B cell (primary cell): ENCODE measurements at regions of chr1 and their contacts with region 1.

Region 1: GRCh38 chr1:50873458-50874187 is 86.4 kb downstream of the FAF1 start:
- DNase-seq: peak; percentile 86
- ATAC-seq: peak; percentile 88
- H3K4me3 ChIP-seq: peak overlapping the region in 2 of 5 experiments; percentile 30 to 41
- H3K4me3 Mint-ChIP-seq: peak overlapping the region; percentile 81
- H3K27ac ChIP-seq: no peak overlapping the region
- H3K27ac Mint-ChIP-seq: peak overlapping the region; percentile 68
- H3K4me1 ChIP-seq: peaks cover 0 to 3% of the 10 kb centered on the region in 2 donors
- H3K4me1 Mint-ChIP-seq: peaks cover 11% of the 10 kb centered on the region
- H3K27me3 ChIP-seq: no peaks in the 10 kb centered on the region
- H3K27me3 Mint-ChIP-seq: no peaks in the 10 kb centered on the region
- CTCF ChIP-seq: peak; percentile 91

Region 2: GRCh38 chr1:50109647-50110075 is 764.0 kb before region 1 on chr1:
- CTCF ChIA-PET with region 1: no interaction called
- POLR2A ChIA-PET with region 1: no interaction called
- intact Hi-C with region 1: no loop called
- DNase-seq: peak; percentile 4
- ATAC-seq: no peak
- H3K4me3 ChIP-seq: no peak overlapping the region
- H3K4me3 Mint-ChIP-seq: peak overlapping the region; percentile 9
- H3K27ac ChIP-seq: no peak overlapping the region
- H3K27ac Mint-ChIP-seq: no peak overlapping the region
- H3K4me1 ChIP-seq: peaks cover 14 to 19% of the 10 kb centered on the region in 2 donors
- H3K4me1 Mint-ChIP-seq: peaks cover 18% of the 10 kb centered on the region
- H3K27me3 ChIP-seq: peaks cover 0 to 11% (median 5%) of the 10 kb centered on the region in 4 experiments
- H3K27me3 Mint-ChIP-seq: peaks cover 58% of the 10 kb centered on the region
- CTCF ChIP-seq: no peak

Region 3: GRCh38 chr1:50942334-50942733 is 68.7 kb after region 1 on chr1:
- CTCF ChIA-PET with region 1: no interaction called
- POLR2A ChIA-PET with region 1: no interaction called
- intact Hi-C with region 1: no loop called
- DNase-seq: no peak
- ATAC-seq: no peak
- H3K4me3 ChIP-seq: no peak overlapping the region
- H3K4me3 Mint-ChIP-seq: no peak overlapping the region
- H3K27ac ChIP-seq: no peak overlapping the region
- H3K27ac Mint-ChIP-seq: no peak overlapping the region
- H3K4me1 ChIP-seq: no peaks in the 10 kb centered on the region
- H3K4me1 Mint-ChIP-seq: peaks cover 26% of the 10 kb centered on the region
- H3K27me3 ChIP-seq: no peaks in the 10 kb centered on the region
- H3K27me3 Mint-ChIP-seq: no peaks in the 10 kb centered on the region
- CTCF ChIP-seq: no peak

Region 4: GRCh38 chr1:51019811-51020210 is 146.2 kb after region 1 on chr1:
- CTCF ChIA-PET with region 1: no interaction called
- POLR2A ChIA-PET with region 1: no interaction called
- intact Hi-C with region 1: no loop called
- DNase-seq: no peak
- ATAC-seq: no peak
- H3K4me3 ChIP-seq: no peak overlapping the region
- H3K4me3 Mint-ChIP-seq: no peak overlapping the region
- H3K27ac ChIP-seq: no peak overlapping the region
- H3K27ac Mint-ChIP-seq: no peak overlapping the region
- H3K4me1 ChIP-seq: no peaks in the 10 kb centered on the region
- H3K4me1 Mint-ChIP-seq: no peaks in the 10 kb centered on the region
- H3K27me3 ChIP-seq: no peaks in the 10 kb centered on the region
- H3K27me3 Mint-ChIP-seq: peaks cover 3% of the 10 kb centered on the region
- CTCF ChIP-seq: no peak

Region 5: DNA sequence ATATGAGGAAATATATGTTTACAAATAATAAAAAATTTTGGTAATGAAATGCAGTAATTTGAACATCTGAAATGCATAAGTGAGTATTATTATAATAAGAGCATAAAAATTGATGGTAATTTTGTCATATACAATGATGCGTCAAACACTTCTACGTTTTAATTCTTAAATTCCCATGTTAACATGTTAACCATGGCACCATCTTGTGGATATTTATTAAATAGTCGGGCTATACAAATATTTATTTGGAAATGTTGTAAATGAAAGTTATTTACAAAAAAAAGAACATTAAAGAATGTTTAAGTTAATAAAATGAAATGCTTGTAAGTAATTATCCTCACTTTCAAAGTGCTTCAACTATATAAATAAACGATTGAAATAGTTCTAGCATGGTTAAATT is 171.2 kb after region 1 on chr1:
- CTCF ChIA-PET with region 1: interaction called, 6 read pairs
- POLR2A ChIA-PET with region 1: no interaction called
- intact Hi-C with region 1: loop called (anchors 1 kb)
- DNase-seq: peak; percentile 16
- ATAC-seq: no peak
- H3K4me3 ChIP-seq: no peak overlapping the region
- H3K4me3 Mint-ChIP-seq: no peak overlapping the region
- H3K27ac ChIP-seq: no peak overlapping the region
- H3K27ac Mint-ChIP-seq: no peak overlapping the region
- H3K4me1 ChIP-seq: no peaks in the 10 kb centered on the region
- H3K4me1 Mint-ChIP-seq: no peaks in the 10 kb centered on the region
- H3K27me3 ChIP-seq: no peaks in the 10 kb centered on the region
- H3K27me3 Mint-ChIP-seq: peaks cover 15% of the 10 kb centered on the region
- CTCF ChIP-seq: peak; percentile 49